Activated CD4-positive, alpha-beta memory T cell treated with anti-CD3 and anti-CD28 coated beads for 36 hours (primary cell): ENCODE measurements at regions of chr1 and their contacts with region 1.

Region 1: GRCh38 chr1:212455803-212456528 is 23.2 kb downstream of the NENF start:
- DNase-seq: peak; percentile 88
- H3K4me3 Mint-ChIP-seq: no peak overlapping the region
- H3K27ac Mint-ChIP-seq: no peak overlapping the region
- H3K4me1 Mint-ChIP-seq: peaks cover 3% of the 10 kb centered on the region
- H3K27me3 Mint-ChIP-seq: no peaks in the 10 kb centered on the region

Region 2: GRCh38 chr1:211680752-211681327 is 775.1 kb before region 1 on chr1:
- CTCF ChIA-PET with region 1: interaction called, 166 read pairs
- POLR2A ChIA-PET with region 1: no interaction called
- intact Hi-C with region 1: loop called (anchors 1 kb)
- DNase-seq: peak; percentile 83
- H3K4me3 Mint-ChIP-seq: no peak overlapping the region
- H3K27ac Mint-ChIP-seq: peak overlapping the region; percentile 69
- H3K4me1 Mint-ChIP-seq: peaks cover 9% of the 10 kb centered on the region
- H3K27me3 Mint-ChIP-seq: no peaks in the 10 kb centered on the region

Region 3: GRCh38 chr1:212040629-212041028 is 415.3 kb before region 1 on chr1:
- CTCF ChIA-PET with region 1: interaction called, 35 read pairs
- POLR2A ChIA-PET with region 1: no interaction called
- intact Hi-C with region 1: no loop called
- DNase-seq: no peak
- H3K4me3 Mint-ChIP-seq: no peak overlapping the region
- H3K27ac Mint-ChIP-seq: no peak overlapping the region
- H3K4me1 Mint-ChIP-seq: peaks cover 33% of the 10 kb centered on the region
- H3K27me3 Mint-ChIP-seq: no peaks in the 10 kb centered on the region

Region 4: DNA sequence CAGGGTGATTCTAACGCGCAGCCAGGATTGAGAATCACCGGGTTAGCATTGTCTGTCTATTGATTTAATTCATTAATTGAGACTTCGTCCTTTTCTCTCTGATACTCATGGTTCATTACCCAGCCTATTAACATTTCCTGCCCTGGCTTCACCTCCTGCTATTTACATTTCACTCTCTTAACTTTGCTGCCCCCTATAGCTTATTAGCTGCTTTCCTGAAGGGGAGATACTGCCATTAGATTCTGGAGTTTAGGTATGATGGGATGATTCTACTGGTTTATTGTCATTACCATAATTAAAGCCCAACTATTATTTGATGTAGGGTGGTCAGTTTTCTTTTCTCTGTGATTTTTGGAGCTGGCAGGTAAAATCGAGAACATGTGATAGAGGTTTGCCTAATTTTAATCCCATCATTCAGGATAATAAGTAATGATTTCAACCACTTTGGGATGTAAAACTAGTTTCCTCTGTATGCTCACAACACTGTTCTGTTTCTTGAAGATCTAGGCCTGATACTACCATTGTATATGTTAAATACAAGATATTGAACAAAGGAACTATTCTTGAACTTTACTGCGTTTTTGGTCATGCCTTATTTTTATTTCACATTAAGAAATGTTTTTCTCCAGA is 164.3 kb before region 1 on chr1:
- CTCF ChIA-PET with region 1: interaction called, 7 read pairs
- POLR2A ChIA-PET with region 1: no interaction called
- intact Hi-C with region 1: loop called (anchors 5 kb)
- DNase-seq: no peak
- H3K4me3 Mint-ChIP-seq: no peak overlapping the region
- H3K27ac Mint-ChIP-seq: peak overlapping the region; percentile 47
- H3K4me1 Mint-ChIP-seq: peaks cover 81% of the 10 kb centered on the region
- H3K27me3 Mint-ChIP-seq: no peaks in the 10 kb centered on the region

Region 5: DNA sequence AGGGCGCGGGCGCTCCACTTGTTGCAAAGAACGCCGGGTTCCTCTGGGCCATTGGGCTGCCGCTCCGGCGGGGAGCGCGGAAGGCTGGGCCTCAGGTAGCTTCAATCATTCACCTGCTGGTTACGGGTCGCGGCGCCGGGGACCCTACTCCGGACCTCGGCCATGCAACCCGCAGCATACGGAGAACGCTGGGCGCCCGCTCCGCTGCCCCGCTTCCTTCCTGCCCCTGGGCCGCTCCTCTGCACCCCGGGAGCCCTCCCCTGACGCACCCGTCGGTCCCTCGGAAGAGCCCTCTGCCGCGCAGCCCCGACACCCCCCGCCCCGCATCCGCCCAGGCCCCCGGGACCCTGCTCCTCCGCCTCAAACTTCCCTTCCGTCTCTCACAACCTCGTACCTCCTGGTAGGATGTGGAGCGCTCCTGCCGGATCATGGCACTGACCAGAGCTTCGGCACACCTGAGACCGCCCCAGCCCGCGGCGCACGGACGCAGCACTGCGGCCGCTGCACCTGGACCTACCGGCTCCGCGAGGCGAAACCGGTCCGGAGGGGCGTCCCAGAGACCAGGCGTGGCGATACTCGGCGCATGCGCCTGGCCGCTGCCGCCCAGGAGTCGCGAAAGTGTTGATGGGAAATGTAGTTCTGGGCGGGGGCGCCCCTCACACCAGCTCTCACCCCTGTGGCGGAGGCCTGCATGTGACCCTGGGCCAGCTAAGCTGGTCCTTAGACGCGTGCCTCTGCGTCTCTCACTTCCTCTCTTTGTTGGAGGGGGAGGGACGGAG is 41.4 kb before region 1 on chr1 and contains the start of gene PACC1:
- CTCF ChIA-PET with region 1: interaction called, 18 read pairs
- POLR2A ChIA-PET with region 1: no interaction called
- intact Hi-C with region 1: no loop called
- DNase-seq: peak; percentile 94
- H3K4me3 Mint-ChIP-seq: peak within 1 kb of the TSS; percentile 97
- H3K27ac Mint-ChIP-seq: peak within 1 kb of the TSS; percentile 74
- H3K4me1 Mint-ChIP-seq: peaks cover 20% of the 10 kb centered on the region
- H3K27me3 Mint-ChIP-seq: no peaks in the 10 kb centered on the region
- total RNA-seq, gene PACC1: 9.6 to 10.0 TPM

Region 6: GRCh38 chr1:212477014-212477679 is 21.2 kb after region 1 on chr1:
- CTCF ChIA-PET with region 1: interaction called, 83 read pairs
- POLR2A ChIA-PET with region 1: no interaction called
- intact Hi-C with region 1: no loop called
- DNase-seq: peak; percentile 87
- H3K4me3 Mint-ChIP-seq: peak overlapping the region; percentile 11
- H3K27ac Mint-ChIP-seq: no peak overlapping the region
- H3K4me1 Mint-ChIP-seq: peaks cover 14% of the 10 kb centered on the region
- H3K27me3 Mint-ChIP-seq: peaks cover 6% of the 10 kb centered on the region

Region 7: DNA sequence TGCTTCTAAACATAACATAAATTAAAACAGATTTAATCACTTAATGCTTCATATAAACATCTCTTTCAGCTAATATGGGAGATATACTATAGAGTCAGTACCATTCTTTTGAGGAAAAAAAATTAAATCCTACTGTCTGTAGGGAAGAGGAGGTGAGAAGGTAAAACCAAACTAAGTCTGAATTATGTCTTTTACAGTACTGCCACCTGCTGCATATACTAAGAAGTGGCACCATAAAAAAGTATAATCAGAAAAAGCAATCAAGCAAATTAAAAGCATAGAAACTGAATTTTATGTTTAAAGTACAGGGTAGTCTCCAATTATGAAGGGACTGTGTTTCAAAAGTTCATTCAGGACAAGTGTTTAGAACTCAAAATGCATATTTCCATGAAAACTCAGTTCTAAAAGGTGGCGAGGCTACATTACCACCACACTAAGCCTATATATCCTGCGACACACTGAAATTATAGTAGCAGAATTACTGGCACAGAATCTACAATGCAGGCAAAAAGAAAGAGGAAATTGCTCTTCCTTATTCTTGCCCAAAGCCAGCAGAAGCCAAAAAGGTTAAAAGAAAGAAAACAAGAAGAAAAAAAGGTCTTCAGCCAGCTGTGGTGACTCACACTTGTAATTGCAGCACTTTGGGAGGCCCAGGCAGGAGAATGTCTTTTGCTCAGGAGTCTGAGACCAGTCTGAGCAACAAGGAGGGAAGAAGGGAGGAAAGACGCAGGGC is 326.6 kb after region 1 on chr1:
- CTCF ChIA-PET with region 1: interaction called, 20 read pairs
- POLR2A ChIA-PET with region 1: no interaction called
- intact Hi-C with region 1: loop called (anchors 1 kb)
- DNase-seq: no peak
- H3K4me3 Mint-ChIP-seq: no peak overlapping the region
- H3K27ac Mint-ChIP-seq: peak overlapping the region; percentile 6
- H3K4me1 Mint-ChIP-seq: peaks cover 37% of the 10 kb centered on the region
- H3K27me3 Mint-ChIP-seq: no peaks in the 10 kb centered on the region

Region 8: DNA sequence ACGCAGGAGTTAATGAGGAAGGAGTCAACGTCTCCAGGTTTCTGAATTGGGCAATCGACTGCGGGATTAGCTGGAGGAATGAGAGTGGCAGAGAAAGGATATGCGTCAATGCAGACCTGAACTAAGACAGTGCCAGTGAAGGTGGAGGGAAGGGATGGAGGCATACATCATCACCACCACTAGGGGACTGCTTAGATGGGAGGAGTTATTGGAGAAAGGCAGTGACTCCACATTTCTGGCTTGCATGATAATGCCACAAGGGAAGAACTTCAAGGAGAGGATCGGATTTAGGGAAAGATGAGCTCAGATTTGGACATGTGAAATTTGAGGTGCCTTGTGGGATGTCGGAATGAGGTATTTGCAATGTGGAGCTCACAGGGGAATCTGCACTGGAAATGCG is 511.8 kb after region 1 on chr1:
- CTCF ChIA-PET with region 1: no interaction called
- POLR2A ChIA-PET with region 1: no interaction called
- intact Hi-C with region 1: no loop called
- DNase-seq: no peak
- H3K4me3 Mint-ChIP-seq: no peak overlapping the region
- H3K27ac Mint-ChIP-seq: no peak overlapping the region
- H3K4me1 Mint-ChIP-seq: peaks cover 4% of the 10 kb centered on the region
- H3K27me3 Mint-ChIP-seq: peaks cover 17% of the 10 kb centered on the region